ENCODE measurements at regions of chr10 and their contacts with region 1.

Region 1: DNA sequence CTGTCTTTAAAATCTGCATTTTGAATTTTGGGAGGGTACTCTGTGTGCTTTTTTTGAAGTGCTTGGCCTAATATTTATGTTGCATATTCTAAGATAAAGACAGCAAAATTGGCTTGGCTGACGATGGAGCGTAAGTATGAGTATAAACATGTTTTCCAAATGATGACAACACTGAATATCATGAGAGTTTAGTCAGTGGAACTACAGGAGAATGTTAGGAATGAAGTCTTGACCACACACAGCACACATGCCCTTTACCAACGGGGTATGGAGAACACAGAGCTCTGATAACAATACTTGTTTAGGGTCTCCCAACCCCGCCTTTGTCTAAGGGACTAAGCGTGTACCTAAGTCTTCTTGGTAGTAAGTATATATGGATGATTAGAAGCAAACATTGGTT is 253.9 kb upstream of the FZD8 start:
- DNase-seq: peak; percentile 71
- H3K4me3 ChIP-seq: no peak overlapping the region
- H3K27ac ChIP-seq: peak overlapping the region; percentile 68
- H3K4me1 ChIP-seq: peaks cover 17% of the 10 kb centered on the region
- H3K27me3 ChIP-seq: no peaks in the 10 kb centered on the region
- CTCF ChIP-seq: no peak

Region 2: DNA sequence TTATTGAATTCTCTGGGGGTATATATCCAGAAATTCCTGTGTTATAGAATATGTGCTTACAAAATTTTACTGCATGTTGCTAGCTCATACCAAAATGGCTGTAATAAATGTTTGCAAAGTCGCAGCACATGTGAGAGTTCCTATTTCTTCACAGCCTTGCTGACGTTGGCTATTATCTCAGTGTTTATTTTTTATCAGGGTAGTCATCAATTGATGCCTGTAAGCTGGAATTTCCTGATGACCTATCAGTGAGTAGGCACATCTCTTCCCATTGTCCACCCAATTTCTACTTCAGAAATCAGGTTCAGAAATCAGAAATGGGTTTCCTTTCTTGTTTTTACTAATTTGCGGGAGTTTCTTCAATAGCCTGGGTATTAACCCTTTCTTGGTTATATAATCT is 14.2 kb after region 1 on chr10:
- CTCF ChIA-PET with region 1: no interaction called
- dilution Hi-C with region 1: no loop called
- in situ Hi-C with region 1: no loop called
- intact Hi-C with region 1: loop called (anchors 2 kb)
- DNase-seq: peak; percentile 92
- H3K4me3 ChIP-seq: no peak overlapping the region
- H3K27ac ChIP-seq: peak overlapping the region; percentile 85
- H3K4me1 ChIP-seq: peaks cover 42% of the 10 kb centered on the region
- H3K27me3 ChIP-seq: no peaks in the 10 kb centered on the region
- CTCF ChIP-seq: no peak

Region 3: GRCh38 chr10:36666451-36666850 is 770.5 kb after region 1 on chr10:
- CTCF ChIA-PET with region 1: no interaction called
- dilution Hi-C with region 1: no loop called
- in situ Hi-C with region 1: no loop called
- intact Hi-C with region 1: no loop called
- DNase-seq: peak; percentile 31
- H3K4me3 ChIP-seq: no peak overlapping the region
- H3K27ac ChIP-seq: no peak overlapping the region
- H3K4me1 ChIP-seq: peaks cover 3% of the 10 kb centered on the region
- H3K27me3 ChIP-seq: no peaks in the 10 kb centered on the region
- CTCF ChIP-seq: no peak

Measured in mammary epithelial cell (primary cell).